Heart left ventricle (tissue), 16 donors: ENCODE measurements at regions of chr12 and their contacts with region 1.

Region 1: GRCh38 chr12:100200463-100201181 is at the start of gene ACTR6:
- DNase-seq: peak; percentile 94 to 96 (median 95)
- ATAC-seq: peak; percentile 98 to 99 (median 99)
- H3K4me3 ChIP-seq: peak within 1 kb of the TSS; percentile 54 to 94 (median 66)
- H3K27ac ChIP-seq: peak within 1 kb of the TSS in 11 of 12 donors; percentile 14 to 87 (median 65)
- H3K4me1 ChIP-seq: peaks cover 0 to 27% (median 14%) of the 10 kb centered on the region in 12 donors
- H3K27me3 ChIP-seq: no peaks in the 10 kb centered on the region
- CTCF ChIP-seq: peak in 1 of 12 donors; percentile 10
- POLR2A ChIP-seq: no peak
- total RNA-seq, gene ACTR6: 8.9 to 29.5 (median 21.9) TPM

Region 2: DNA sequence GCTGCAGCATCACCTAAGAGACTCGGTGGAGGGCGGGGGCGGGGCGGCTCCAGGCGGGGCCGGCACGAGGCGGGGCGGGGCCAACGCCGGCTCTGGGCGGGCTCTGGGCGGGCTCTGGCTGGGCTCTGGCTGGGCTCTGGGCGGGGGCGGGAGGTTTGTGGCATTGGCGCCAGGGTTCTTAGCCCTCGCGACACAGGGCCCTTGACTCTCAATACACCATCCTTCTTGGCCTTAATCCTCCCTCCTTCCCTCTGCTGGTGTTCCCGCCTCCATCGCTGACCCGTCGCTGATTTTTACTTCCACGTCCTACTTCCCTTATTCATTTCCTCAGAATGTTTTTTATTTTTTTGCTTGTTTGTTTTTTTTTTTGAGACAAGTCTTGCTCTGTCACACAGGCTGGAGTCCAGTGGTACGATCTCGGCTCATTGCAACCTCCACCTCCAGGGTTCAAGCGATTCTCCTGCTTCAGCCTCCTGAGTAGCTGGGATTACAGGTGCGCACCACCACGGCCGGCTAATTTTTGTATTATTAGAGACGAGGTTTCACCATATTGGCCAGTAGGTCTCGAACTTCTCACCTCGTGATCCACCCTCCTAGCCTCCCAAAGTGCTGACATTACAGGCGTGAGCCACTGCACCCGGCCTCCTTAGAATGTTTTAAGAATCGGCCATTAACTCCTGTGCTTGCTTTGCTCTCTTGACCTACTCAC is 57.6 kb before region 1 on chr12 and contains the start of gene BLTP3B:
- intact Hi-C with region 1: loop called in 8 of 10 experiments (anchors 1 to 10 kb)
- DNase-seq: peak; percentile 93 to 96 (median 94)
- ATAC-seq: peak; percentile 94 to 99 (median 98)
- H3K4me3 ChIP-seq: peak within 1 kb of the TSS; percentile 68 to 100 (median 93)
- H3K27ac ChIP-seq: peak within 1 kb of the TSS; percentile 61 to 98 (median 94)
- H3K4me1 ChIP-seq: peaks cover 0 to 43% (median 21%) of the 10 kb centered on the region in 12 donors
- H3K27me3 ChIP-seq: no peaks in the 10 kb centered on the region
- CTCF ChIP-seq: no peak
- POLR2A ChIP-seq: no peak
- total RNA-seq, gene BLTP3B: 14.0 to 22.4 (median 16.2) TPM

Region 3: DNA sequence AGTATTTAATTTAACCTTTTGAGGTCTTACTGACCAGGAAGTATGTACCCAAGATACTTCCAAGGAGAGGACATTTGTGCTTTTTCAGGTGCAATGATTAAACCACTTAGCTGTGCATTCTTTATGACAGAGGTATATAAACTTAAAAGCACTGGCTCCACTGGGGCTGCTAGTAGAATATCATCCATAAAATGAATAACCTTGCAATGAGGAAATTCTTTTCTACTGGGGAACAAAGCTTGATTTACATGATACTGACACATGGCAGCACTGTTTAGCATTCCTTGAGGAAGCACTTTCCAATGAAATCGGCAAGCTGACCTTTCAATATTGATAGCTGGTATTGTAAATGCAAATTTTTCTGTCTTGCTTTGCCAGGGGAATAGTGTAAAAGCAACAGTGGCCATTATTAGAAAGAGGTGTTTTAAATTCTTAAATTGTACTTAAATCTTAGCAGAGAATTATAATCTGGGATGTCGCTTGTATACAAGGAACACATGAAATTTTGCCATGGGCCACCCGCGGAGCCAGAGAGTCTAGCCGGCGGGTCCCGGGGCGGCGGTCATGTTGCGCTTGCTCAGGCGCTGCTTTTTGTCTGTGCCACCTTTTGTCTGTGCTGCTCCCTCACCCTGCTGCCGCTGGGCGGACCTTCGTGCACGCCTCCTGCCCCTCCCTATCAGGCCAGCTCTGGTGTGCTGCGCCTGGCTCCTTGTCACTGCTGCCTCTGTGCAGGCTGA is 37.0 kb before region 1 on chr12:
- intact Hi-C with region 1: loop called in 3 of 10 experiments (anchors 5 kb)
- DNase-seq: peak; percentile 77 to 91 (median 89)
- ATAC-seq: peak; percentile 99 to 100 (median 100)
- H3K4me3 ChIP-seq: peak overlapping the region in 9 of 12 donors; percentile 21 to 44 (median 37)
- H3K27ac ChIP-seq: peak overlapping the region in 1 of 12 donors; percentile 14
- H3K4me1 ChIP-seq: peaks cover 0 to 14% (median 5%) of the 10 kb centered on the region in 12 donors
- H3K27me3 ChIP-seq: no peaks in the 10 kb centered on the region
- CTCF ChIP-seq: peak in 5 of 12 donors; percentile 15 to 44 (median 23)
- POLR2A ChIP-seq: peak in 1 of 2 donors; percentile 33